ENCODE measurements at regions of chr1 and their contacts with region 1.

Region 1: GRCh38 chr1:65419681-65420589 is 533 bp upstream of the LEPR start:
- DNase-seq: peak; percentile 99
- H3K4me3 Mint-ChIP-seq: no peak overlapping the region
- H3K27ac Mint-ChIP-seq: peak overlapping the region; percentile 89
- H3K4me1 Mint-ChIP-seq: peaks cover 20% of the 10 kb centered on the region
- H3K27me3 Mint-ChIP-seq: no peaks in the 10 kb centered on the region

Region 2: GRCh38 chr1:63522891-63523728 is 1896.8 kb before region 1 on chr1 and contains the starts of genes EFCAB7 and ITGB3BP:
- CTCF ChIA-PET with region 1: no interaction called
- intact Hi-C with region 1: loop called (anchors 5 kb)
- DNase-seq: peak; percentile 86
- H3K4me3 Mint-ChIP-seq: peak within 1 kb of the TSS; percentile 97
- H3K27ac Mint-ChIP-seq: peak within 1 kb of the TSS; percentile 95
- H3K4me1 Mint-ChIP-seq: peaks cover 24% of the 10 kb centered on the region
- H3K27me3 Mint-ChIP-seq: no peaks in the 10 kb centered on the region
- total RNA-seq, gene EFCAB7: 6.3 to 6.4 TPM
- total RNA-seq, gene ITGB3BP: 59.1 to 59.7 TPM

Region 3: DNA sequence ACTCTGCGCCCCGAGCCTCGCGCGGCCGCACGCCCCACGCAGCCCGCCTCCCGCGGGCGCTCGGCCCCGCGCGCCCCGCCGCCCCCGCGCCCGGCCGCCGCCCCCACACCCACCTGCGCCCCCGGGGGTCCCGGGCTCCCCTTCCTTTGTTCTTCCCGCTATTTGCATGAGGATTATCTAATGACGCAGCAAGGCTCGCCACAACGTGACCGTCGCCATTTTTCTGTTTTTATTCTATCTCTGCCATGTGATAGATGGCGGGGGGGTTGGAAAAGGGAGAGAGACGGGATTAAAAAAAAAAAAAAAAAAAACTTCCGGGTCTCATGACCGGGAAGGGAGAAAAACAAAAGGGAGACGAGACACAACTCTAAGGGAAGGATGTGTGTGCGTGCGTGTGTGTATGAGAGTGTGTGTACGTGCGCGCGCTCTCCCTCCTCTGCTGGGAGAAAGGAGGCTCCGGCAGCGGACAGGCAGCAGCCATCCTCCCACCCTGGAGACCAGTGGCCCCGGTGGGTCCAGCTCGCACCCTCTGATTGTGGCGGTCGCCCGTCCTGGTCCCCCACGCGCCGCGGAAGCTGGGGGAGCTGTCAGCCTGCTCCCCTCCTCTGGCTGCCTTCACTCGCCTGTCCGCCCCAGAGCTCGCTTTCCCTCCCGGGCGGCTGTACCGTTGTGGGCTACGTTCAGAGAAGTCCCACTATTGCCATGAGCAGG is 352.3 kb before region 1 on chr1:
- CTCF ChIA-PET with region 1: no interaction called
- intact Hi-C with region 1: loop called (anchors 1 kb)
- DNase-seq: peak; percentile 71
- H3K4me3 Mint-ChIP-seq: peak overlapping the region; percentile 87
- H3K27ac Mint-ChIP-seq: peak overlapping the region; percentile 95
- H3K4me1 Mint-ChIP-seq: peaks cover 51% of the 10 kb centered on the region
- H3K27me3 Mint-ChIP-seq: no peaks in the 10 kb centered on the region

Region 4: DNA sequence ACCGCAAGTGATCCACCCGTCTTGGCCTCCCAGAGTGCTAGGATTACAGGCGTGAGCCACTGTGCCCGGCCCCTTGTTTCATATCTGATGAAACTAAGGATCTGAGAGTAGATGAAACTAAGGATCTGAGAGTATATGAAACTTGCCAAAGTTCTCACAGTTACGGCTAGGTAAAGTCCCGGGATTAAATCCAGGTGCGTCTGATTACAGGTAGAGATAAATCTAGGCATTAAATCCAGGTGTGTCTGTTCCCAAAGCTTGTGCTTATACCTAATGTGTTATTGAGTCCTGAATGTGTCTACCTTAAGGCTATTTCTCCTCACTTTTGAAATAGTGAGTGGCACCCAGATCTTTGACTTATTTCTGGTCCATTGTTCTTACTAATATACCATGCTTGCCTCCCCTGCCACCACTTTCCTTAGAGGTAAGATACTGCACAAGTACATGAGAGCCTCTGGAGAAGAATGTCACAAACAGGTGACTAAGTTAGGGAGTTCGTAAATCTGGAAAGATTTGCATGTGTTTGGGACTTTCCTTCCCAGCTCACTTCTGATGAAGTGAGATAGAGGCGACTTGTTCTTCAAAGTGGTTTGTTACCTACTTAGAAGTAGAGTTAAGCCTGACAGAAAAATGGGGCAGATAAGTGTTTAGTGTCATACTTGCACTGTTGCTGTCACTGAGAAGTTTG is 205.5 kb before region 1 on chr1:
- CTCF ChIA-PET with region 1: interaction called, 5 read pairs
- intact Hi-C with region 1: loop called (anchors 1 kb)
- DNase-seq: no peak
- H3K4me3 Mint-ChIP-seq: no peak overlapping the region
- H3K27ac Mint-ChIP-seq: no peak overlapping the region
- H3K4me1 Mint-ChIP-seq: peaks cover 41% of the 10 kb centered on the region
- H3K27me3 Mint-ChIP-seq: no peaks in the 10 kb centered on the region

Region 5: GRCh38 chr1:65393347-65393746 is 26.6 kb before region 1 on chr1:
- CTCF ChIA-PET with region 1: no interaction called
- intact Hi-C with region 1: loop called (anchors 1 kb)
- DNase-seq: peak; percentile 39
- H3K4me3 Mint-ChIP-seq: no peak overlapping the region
- H3K27ac Mint-ChIP-seq: no peak overlapping the region
- H3K4me1 Mint-ChIP-seq: peaks cover 22% of the 10 kb centered on the region
- H3K27me3 Mint-ChIP-seq: no peaks in the 10 kb centered on the region

Region 6: DNA sequence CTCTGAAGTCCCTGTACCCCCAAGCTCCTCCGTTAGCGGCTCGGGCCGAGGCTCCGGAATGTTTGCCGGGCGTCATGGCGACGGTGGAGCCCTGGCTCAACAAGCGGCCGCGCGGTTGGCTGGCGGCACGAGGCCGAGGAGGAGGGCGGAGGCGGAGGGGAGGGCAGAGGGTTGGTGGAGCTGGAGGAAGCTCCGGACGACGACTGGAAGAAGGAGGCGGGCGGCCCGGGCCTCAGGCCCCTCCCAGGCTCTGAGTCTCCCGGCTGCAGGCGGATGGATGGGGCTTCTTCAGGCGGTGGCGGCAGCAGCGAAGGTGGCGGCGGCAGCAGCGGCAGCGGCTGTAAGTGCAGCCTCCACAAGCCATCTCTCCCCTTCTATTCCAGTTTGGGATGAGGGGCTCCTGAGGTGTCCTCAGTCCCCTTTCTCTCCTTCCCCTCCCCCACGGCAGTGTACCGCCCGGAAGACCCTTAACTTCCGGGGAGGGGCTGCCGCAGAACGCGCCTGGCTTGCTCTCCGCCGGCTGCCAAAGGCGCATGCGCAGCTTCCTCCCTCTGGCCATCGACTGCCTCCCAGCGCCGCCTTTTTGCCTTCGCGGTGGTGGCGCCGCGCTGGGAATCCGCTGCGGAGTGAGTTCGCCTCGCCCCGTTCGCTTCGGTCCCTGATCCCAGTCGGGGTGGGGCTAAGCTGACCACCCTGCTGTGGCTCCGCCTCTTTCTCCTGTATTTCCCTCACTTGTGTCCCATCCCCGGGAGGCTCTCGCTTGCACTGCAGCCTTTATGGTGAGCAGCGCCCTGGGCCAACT is 1505.0 kb after region 1 on chr1 and contains the starts of genes DNAI4 and MIER1:
- CTCF ChIA-PET with region 1: no interaction called
- intact Hi-C with region 1: loop called (anchors 5 kb)
- DNase-seq: peak; percentile 98
- H3K4me3 Mint-ChIP-seq: peak within 1 kb of the TSS; percentile 92
- H3K27ac Mint-ChIP-seq: peak within 1 kb of the TSS; percentile 95
- H3K4me1 Mint-ChIP-seq: peaks cover 50% of the 10 kb centered on the region
- H3K27me3 Mint-ChIP-seq: no peaks in the 10 kb centered on the region
- total RNA-seq, gene DNAI4: 0.83 to 1.5 TPM
- total RNA-seq, gene MIER1: 56.5 to 58.3 TPM

Measured in activated naive CD4-positive, alpha-beta T cell treated with anti-CD3 and anti-CD28 coated beads for 36 hours (primary cell).